IMR-90 (cell line): ENCODE measurements at regions of chr12 and their contacts with region 1.

Region 1: GRCh38 chr12:120649442-120650232 is 9.2 kb downstream of the CABP1 start:
- DNase-seq: peak; percentile 5
- ATAC-seq: no peak
- H3K4me3 ChIP-seq: peak overlapping the region; percentile 14; the same call in 1 of the 2 replicates
- H3K27ac ChIP-seq: no peak overlapping the region
- H3K4me1 ChIP-seq: peaks cover 3% of the 10 kb centered on the region; the same call in 1 of the 2 replicates
- H3K27me3 ChIP-seq: peaks cover 54% of the 10 kb centered on the region
- CTCF ChIP-seq: no peak
- POLR2A ChIP-seq: no peak
- RAD21 ChIP-seq: no peak

Region 2: GRCh38 chr12:120327593-120327992 is 322.0 kb before region 1 on chr12 and contains the start of gene PLA2G1B:
- CTCF ChIA-PET with region 1: interaction called, 3 read pairs
- POLR2A ChIA-PET with region 1: no interaction called
- dilution Hi-C with region 1: no loop called
- in situ Hi-C with region 1: no loop called
- intact Hi-C with region 1: loop called (anchors 1 kb)
- DNase-seq: no peak
- ATAC-seq: no peak
- H3K4me3 ChIP-seq: no peak within 1 kb of the TSS
- H3K27ac ChIP-seq: no peak within 1 kb of the TSS
- H3K4me1 ChIP-seq: no peaks in the 10 kb centered on the region
- H3K27me3 ChIP-seq: peaks cover 14% of the 10 kb centered on the region; the same call in 1 of the 2 replicates
- CTCF ChIP-seq: no peak
- POLR2A ChIP-seq: no peak
- RAD21 ChIP-seq: no peak
- total RNA-seq, gene PLA2G1B: not detected in 2 replicates

Region 3: GRCh38 chr12:120687578-120688289 is 38.1 kb after region 1 on chr12:
- CTCF ChIA-PET with region 1: interaction called, 6 read pairs
- POLR2A ChIA-PET with region 1: no interaction called
- dilution Hi-C with region 1: no loop called
- in situ Hi-C with region 1: no loop called
- intact Hi-C with region 1: loop called (anchors 1 kb)
- DNase-seq: no peak
- ATAC-seq: no peak
- H3K4me3 ChIP-seq: peak overlapping the region; percentile 86
- H3K27ac ChIP-seq: peak overlapping the region; percentile 76
- H3K4me1 ChIP-seq: peaks cover 10% of the 10 kb centered on the region
- H3K27me3 ChIP-seq: no peaks in the 10 kb centered on the region
- CTCF ChIP-seq: no peak
- POLR2A ChIP-seq: no peak
- RAD21 ChIP-seq: no peak

Region 4: GRCh38 chr12:120971299-120972179 is 321.9 kb after region 1 on chr12:
- CTCF ChIA-PET with region 1: interaction called, 11 read pairs
- POLR2A ChIA-PET with region 1: no interaction called
- dilution Hi-C with region 1: no loop called
- in situ Hi-C with region 1: no loop called
- intact Hi-C with region 1: loop called (anchors 1 kb)
- DNase-seq: peak; percentile 63
- ATAC-seq: peak; percentile 92
- H3K4me3 ChIP-seq: no peak overlapping the region
- H3K27ac ChIP-seq: no peak overlapping the region
- H3K4me1 ChIP-seq: no peaks in the 10 kb centered on the region
- H3K27me3 ChIP-seq: peaks cover 14% of the 10 kb centered on the region; the same call in 1 of the 2 replicates
- CTCF ChIP-seq: peak; percentile 84
- POLR2A ChIP-seq: no peak
- RAD21 ChIP-seq: peak; percentile 79

Region 5: DNA sequence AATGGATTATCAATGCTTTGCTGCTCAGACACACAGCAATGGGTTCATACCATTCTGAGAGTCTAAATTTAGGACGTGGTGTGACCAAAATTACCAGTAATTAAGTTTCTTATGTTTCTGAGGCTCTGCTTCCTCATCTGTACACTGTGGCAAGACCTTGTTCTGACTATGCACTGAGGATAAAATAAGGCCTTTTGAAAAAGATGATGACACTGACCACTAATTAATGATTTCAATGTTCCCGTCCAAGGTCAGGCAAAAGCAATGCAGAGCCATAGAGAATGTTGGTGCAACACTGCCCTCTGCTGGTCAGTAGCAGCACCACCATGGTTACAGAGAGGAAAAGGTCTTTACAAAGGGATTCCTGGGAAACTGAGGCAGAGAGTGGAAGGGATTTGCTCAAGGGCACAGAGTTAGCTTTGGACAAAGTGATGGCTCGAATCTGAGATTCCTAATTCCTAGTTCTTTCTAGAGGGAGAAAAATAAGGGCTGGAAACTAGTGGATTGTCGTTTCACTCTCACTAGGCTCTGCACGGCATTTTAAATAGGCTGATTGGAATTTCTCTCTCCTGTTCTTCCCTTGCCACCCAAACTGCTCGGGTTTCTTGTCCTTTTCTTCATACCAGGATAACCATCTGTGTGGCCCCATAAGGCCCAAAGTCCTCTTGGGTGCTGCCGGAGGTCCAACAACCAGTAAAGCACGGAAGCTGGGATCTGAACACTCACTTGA is 460.7 kb after region 1 on chr12:
- CTCF ChIA-PET with region 1: no interaction called
- POLR2A ChIA-PET with region 1: no interaction called
- dilution Hi-C with region 1: no loop called
- in situ Hi-C with region 1: no loop called
- intact Hi-C with region 1: loop called (anchors 2 kb)
- DNase-seq: peak; percentile 61
- ATAC-seq: peak; percentile 92
- H3K4me3 ChIP-seq: no peak overlapping the region
- H3K27ac ChIP-seq: no peak overlapping the region
- H3K4me1 ChIP-seq: no peaks in the 10 kb centered on the region
- H3K27me3 ChIP-seq: peaks cover 2% of the 10 kb centered on the region
- CTCF ChIP-seq: peak; percentile 88
- POLR2A ChIP-seq: no peak
- RAD21 ChIP-seq: peak; percentile 88